ENCODE measurements at regions of chr13 and their contacts with region 1.

Region 1: GRCh38 chr13:49996951-49997895 is at the start of gene TRIM13:
- DNase-seq: peak; percentile 90
- H3K4me3 Mint-ChIP-seq: peak within 1 kb of the TSS; percentile 79
- H3K27ac Mint-ChIP-seq: peak within 1 kb of the TSS; percentile 85
- H3K4me1 Mint-ChIP-seq: peaks cover 33% of the 10 kb centered on the region
- H3K27me3 Mint-ChIP-seq: no peaks in the 10 kb centered on the region
- total RNA-seq, gene TRIM13: 15.5 to 15.8 TPM

Region 2: DNA sequence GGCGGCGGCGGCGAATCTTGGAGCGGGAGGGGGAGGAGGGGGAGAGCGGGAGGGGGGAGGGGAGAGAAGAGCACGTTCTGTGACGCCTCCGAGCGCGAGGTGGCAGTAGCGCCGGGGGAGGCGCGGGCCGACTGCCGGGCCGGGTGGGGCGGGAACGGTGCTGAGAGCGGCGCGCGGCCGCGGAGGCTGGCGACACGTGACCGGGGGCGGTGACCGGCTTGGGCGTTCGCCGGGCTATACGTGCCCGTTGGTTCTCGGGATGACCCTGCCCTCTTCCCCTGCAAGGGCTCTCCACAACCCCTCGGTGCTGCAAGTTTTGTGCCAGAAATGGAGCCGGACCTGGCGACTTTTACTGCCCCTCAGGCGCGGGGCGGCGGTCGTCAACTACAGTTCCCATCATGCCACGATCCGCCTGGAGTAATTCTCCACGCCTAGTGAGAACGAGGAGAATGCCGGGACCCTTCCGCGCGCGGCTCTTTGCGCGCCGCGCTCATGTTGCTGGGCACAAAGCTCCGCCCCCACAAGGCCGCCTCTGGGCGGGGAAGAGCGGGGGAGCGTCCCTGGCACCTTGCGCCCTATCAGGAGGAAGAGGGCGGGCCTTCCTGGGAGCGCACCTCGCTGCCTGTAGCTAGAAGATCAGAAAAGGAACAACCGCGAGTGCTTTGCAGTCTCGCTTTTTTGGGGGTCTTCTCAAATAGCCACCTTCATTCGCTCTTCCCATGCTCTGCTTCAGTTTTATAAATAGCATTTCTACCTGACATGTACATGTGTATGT is 204.5 kb before region 1 on chr13 and contains the start of gene KPNA3:
- CTCF ChIA-PET with region 1: no interaction called
- intact Hi-C with region 1: loop called (anchors 1 kb)
- DNase-seq: peak; percentile 96
- H3K4me3 Mint-ChIP-seq: peak within 1 kb of the TSS; percentile 92
- H3K27ac Mint-ChIP-seq: peak within 1 kb of the TSS; percentile 94
- H3K4me1 Mint-ChIP-seq: peaks cover 29% of the 10 kb centered on the region
- H3K27me3 Mint-ChIP-seq: peaks cover 4% of the 10 kb centered on the region
- total RNA-seq, gene KPNA3: 47.9 to 50.7 TPM

Region 3: DNA sequence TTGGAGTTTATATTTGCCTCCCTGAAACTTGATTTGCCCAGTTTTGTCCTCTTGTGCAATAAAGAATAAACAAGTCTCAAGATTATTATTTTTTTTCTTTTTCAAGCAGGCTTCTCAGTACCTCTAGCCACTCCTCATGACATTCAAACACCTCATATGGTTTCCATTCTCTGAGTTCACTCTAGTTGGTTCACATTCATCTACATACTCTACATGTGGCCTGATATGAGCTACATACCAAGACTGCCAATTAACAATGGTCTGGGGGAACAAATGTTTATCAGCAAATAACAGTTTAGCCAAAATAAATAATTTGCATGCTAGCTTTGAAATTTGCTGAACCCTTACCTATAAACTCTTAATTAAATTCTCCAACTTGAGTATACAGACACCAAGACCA is 40.6 kb after region 1 on chr13:
- CTCF ChIA-PET with region 1: interaction called, 3 read pairs
- intact Hi-C with region 1: loop called (anchors 5 kb)
- DNase-seq: no peak
- H3K4me3 Mint-ChIP-seq: no peak overlapping the region
- H3K27ac Mint-ChIP-seq: no peak overlapping the region
- H3K4me1 Mint-ChIP-seq: no peaks in the 10 kb centered on the region
- H3K27me3 Mint-ChIP-seq: no peaks in the 10 kb centered on the region

Region 4: DNA sequence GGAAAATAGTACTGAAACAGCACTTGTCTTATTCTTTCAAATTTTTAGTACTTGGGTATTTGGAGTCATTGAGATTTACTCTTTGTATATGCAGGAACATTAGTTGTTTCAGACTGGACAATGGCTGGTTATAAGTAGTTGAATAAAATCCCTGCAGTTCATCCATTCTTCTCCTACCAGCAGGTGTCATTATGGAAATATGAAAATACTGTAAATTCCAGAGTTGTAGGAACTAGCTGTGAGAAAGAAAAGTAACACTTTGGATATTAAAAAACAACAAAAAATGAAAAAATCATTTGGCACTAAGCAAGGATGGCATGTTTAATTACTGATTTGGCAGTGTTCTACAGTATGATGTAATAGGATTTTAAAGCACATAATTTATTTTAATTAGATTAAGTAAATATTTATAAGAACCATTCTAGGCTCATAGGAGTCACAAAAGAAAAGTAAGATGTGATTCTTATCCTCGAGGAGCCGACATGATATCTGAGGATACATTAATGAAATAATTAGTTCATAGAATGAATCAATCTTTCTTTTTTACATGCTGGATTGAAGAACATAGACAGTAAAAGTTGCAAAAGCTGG is 173.3 kb after region 1 on chr13:
- CTCF ChIA-PET with region 1: interaction called, 3 read pairs
- intact Hi-C with region 1: loop called (anchors 1 kb)
- DNase-seq: no peak
- H3K4me3 Mint-ChIP-seq: no peak overlapping the region
- H3K27ac Mint-ChIP-seq: no peak overlapping the region
- H3K4me1 Mint-ChIP-seq: peaks cover 18% of the 10 kb centered on the region
- H3K27me3 Mint-ChIP-seq: peaks cover 6% of the 10 kb centered on the region

Region 5: DNA sequence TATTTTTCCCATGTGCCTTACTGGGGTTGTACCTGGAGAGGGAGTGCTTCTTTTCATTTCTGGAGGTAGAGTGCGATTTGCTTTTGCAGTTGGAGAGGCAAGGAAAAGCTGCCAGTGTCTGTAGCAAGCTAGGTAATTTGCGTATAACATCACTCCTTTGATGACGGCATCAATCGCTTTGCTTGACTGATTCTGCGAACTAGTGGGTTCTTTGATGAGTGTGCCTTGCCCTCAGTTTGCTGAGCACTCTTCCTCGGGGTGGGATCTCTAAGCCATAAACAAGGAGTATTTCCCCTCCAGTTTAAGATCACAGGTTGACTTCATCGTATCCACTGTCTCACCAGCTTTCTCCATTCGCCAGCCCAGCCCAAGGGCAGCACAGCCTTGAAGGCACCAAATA is 362.6 kb after region 1 on chr13:
- CTCF ChIA-PET with region 1: no interaction called
- intact Hi-C with region 1: loop called (anchors 2 kb)
- DNase-seq: peak; percentile 31
- H3K4me3 Mint-ChIP-seq: no peak overlapping the region
- H3K27ac Mint-ChIP-seq: no peak overlapping the region
- H3K4me1 Mint-ChIP-seq: peaks cover 39% of the 10 kb centered on the region
- H3K27me3 Mint-ChIP-seq: peaks cover 5% of the 10 kb centered on the region

Region 6: GRCh38 chr13:50594276-50595051 is 597.2 kb after region 1 on chr13:
- CTCF ChIA-PET with region 1: no interaction called
- intact Hi-C with region 1: loop called (anchors 5 kb)
- DNase-seq: peak; percentile 64
- H3K4me3 Mint-ChIP-seq: peak overlapping the region; percentile 36
- H3K27ac Mint-ChIP-seq: peak overlapping the region; percentile 10
- H3K4me1 Mint-ChIP-seq: peaks cover 30% of the 10 kb centered on the region
- H3K27me3 Mint-ChIP-seq: no peaks in the 10 kb centered on the region

Measured in activated naive CD4-positive, alpha-beta T cell treated with anti-CD3 and anti-CD28 coated beads for 36 hours (primary cell).